Aorta (tissue), 5 donors: ENCODE measurements at regions of chr11 and their contacts with region 1.

Region 1: GRCh38 chr11:12599408-12600143 is 74.6 kb upstream of the TEAD1 start:
- DNase-seq: peak; percentile 66 to 81
- ATAC-seq: peak; percentile 79
- H3K4me3 ChIP-seq: no peak overlapping the region
- H3K27ac ChIP-seq: no peak overlapping the region
- H3K4me1 ChIP-seq: no peaks in the 10 kb centered on the region
- H3K27me3 ChIP-seq: no peaks in the 10 kb centered on the region

Region 2: GRCh38 chr11:12185914-12186313 is 413.7 kb before region 1 on chr11:
- intact Hi-C with region 1: no loop called
- DNase-seq: peak in 1 of 2 donors; percentile 81
- ATAC-seq: peak; percentile 75
- H3K4me3 ChIP-seq: no peak overlapping the region
- H3K27ac ChIP-seq: peak overlapping the region in 1 of 2 donors; percentile 96
- H3K4me1 ChIP-seq: peaks cover 14 to 27% of the 10 kb centered on the region in 2 donors
- H3K27me3 ChIP-seq: no peaks in the 10 kb centered on the region

Region 3: DNA sequence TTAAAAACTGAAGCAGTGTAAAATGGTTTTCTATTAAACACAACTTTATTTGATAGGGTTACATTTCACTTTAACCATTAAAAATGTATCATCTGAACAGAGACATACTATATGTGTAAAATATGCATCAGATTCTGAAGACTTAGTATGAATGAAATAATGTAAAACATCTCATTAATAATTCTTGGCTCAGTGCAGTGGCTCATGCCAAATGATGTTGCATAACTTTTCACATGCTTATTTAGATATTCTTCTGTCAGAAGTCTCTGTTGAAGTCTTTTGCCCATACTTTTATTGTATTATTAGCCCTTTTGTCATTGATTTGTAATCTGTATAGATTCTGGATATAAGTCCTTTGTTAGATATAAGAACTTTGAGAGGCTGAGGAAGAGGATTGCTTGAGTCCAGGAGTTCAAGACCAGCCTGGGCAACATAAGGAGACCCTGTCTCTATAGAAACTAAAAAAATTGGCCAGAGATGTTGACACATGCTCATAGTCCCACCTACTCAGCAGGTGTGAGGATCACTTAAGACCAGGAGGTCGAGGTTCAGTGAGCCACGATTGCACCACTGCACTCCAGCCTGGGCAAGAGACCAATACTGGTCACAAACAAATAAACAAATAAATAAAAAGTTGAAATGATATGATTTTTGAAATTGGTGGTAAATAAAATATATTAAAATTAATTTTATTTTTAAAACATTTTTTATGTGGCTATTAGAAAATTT is 296.0 kb before region 1 on chr11:
- intact Hi-C with region 1: no loop called
- DNase-seq: no peak
- ATAC-seq: no peak
- H3K4me3 ChIP-seq: no peak overlapping the region
- H3K27ac ChIP-seq: no peak overlapping the region
- H3K4me1 ChIP-seq: no peaks in the 10 kb centered on the region
- H3K27me3 ChIP-seq: no peaks in the 10 kb centered on the region

Region 4: GRCh38 chr11:12813371-12814225 is 214.0 kb after region 1 on chr11:
- intact Hi-C with region 1: loop called in 1 of 2 experiments (anchors 5 kb)
- DNase-seq: no peak
- ATAC-seq: peak; percentile 15
- H3K4me3 ChIP-seq: no peak overlapping the region
- H3K27ac ChIP-seq: no peak overlapping the region
- H3K4me1 ChIP-seq: no peaks in the 10 kb centered on the region
- H3K27me3 ChIP-seq: no peaks in the 10 kb centered on the region